ENCODE measurements at regions of chr3 and their contacts with region 1.

Region 1: GRCh38 chr3:16828815-16829214 is 55.9 kb upstream of the PLCL2 start:
- DNase-seq: peak; percentile 73
- ATAC-seq: peak; percentile 51
- H3K4me3 Mint-ChIP-seq: no peak overlapping the region
- H3K27ac Mint-ChIP-seq: no peak overlapping the region
- H3K4me1 Mint-ChIP-seq: peaks cover 16% of the 10 kb centered on the region
- H3K27me3 Mint-ChIP-seq: no peaks in the 10 kb centered on the region

Region 2: DNA sequence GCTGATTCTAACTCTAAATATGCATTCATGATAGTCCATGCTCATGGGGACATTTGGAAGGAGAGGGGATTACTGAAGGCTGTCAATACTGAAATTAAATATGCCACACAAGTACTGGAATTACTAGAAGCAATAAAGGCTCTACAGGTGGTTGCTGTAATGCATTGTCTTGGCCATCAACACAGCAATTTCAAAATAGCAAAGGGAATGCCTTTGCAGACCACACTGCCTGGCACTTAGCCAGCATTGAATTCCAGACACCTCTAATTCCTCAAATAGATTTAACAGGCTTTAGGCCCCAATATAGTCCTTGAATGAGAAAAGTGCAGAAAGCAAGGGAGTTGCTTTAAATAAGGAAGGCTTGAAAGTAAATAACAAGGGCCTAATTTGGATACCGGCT is 59.9 kb before region 1 on chr3:
- CTCF ChIA-PET with region 1: no interaction called
- POLR2A ChIA-PET with region 1: no interaction called
- intact Hi-C with region 1: no loop called
- DNase-seq: no peak
- ATAC-seq: no peak
- H3K4me3 Mint-ChIP-seq: no peak overlapping the region
- H3K27ac Mint-ChIP-seq: no peak overlapping the region
- H3K4me1 Mint-ChIP-seq: peaks cover 4% of the 10 kb centered on the region
- H3K27me3 Mint-ChIP-seq: no peaks in the 10 kb centered on the region

Region 3: GRCh38 chr3:16842272-16843270 is 13.8 kb after region 1 on chr3:
- CTCF ChIA-PET with region 1: interaction called, 16 read pairs
- POLR2A ChIA-PET with region 1: no interaction called
- intact Hi-C with region 1: no loop called
- DNase-seq: peak; percentile 87
- ATAC-seq: peak; percentile 96
- H3K4me3 Mint-ChIP-seq: peak overlapping the region; percentile 69
- H3K27ac Mint-ChIP-seq: peak overlapping the region; percentile 95
- H3K4me1 Mint-ChIP-seq: peaks cover 75% of the 10 kb centered on the region
- H3K27me3 Mint-ChIP-seq: no peaks in the 10 kb centered on the region